Activated CD8-positive, alpha-beta T cell treated with anti-CD3 and anti-CD28 coated beads for 36 hours (primary cell): ENCODE measurements at regions of chr14 and their contacts with region 1.

Region 1: DNA sequence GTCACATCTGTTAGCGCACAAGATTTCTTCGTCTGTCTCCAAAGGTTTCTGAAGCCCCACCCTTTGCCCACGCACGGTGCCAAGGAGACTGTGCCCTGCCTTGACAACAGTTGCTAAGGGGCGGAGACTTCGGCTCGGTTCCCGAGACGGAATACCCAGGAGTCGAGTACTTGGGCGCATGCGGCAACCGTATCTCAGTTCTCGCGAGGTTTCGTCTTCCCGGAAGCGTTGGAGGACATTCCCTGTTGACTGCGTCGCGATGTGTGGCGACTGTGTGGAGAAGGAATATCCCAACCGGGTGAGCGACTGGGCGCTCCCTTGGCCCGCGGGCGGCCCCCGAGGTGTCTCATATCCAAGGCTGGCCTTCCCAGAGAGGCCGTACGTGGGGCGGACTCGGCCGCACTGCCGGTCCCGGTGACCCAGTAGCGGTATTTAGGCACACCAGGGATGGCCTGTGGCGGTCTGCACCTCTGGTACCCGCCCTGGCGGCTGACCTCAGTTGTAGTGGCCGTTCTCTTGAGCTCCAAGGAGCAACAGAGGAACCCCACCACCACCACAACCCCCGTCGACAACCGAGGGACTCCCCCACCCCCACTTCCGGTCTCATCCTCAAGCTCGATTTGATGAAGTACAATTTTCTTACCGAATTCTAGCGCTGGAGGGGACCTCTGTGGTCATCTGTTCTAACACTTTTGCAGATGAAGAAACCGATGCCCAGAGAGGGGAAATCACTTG is at the start of gene CHURC1:
- DNase-seq: peak; percentile 98
- ATAC-seq: peak; percentile 95
- H3K4me3 Mint-ChIP-seq: peak within 1 kb of the TSS; percentile 79
- H3K27ac Mint-ChIP-seq: peak within 1 kb of the TSS; percentile 95
- H3K4me1 Mint-ChIP-seq: peaks cover 55% of the 10 kb centered on the region
- H3K27me3 Mint-ChIP-seq: no peaks in the 10 kb centered on the region
- CTCF ChIP-seq: no peak
- total RNA-seq, gene CHURC1: 47.0 to 57.4 TPM

Region 2: DNA sequence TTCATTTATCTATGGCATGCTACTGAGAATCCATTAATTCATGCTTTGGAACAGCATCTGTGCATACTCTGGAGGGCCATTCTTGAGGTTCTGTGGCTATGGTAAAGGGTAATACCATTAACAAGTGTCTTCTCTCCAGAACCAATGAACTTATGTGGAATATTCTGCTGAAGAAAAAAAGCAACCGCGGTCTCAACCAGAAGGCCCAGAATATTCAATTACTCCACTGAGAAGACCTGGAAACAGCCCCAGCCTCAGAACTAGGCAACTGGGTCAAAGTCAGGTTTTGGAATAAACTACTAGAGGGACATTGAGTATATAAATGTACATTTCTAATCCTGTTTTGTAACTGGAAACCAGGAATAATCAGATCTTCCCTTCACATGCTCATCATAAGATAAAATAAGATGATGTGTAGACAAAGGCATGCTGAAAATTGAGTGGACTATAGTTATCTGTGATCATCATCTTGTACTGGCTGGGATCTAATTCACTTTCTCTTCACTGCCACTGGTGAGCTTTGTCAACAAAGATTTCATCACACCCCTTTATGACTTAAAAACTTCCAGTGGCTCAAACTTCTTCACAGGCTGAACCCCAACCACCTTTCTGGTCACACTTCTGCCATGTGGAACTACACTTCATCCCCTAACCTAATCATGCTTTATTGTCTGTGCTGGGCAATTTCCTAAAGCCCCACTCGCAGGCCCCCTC is 40.7 kb before region 1 on chr14:
- CTCF ChIA-PET with region 1: no interaction called
- POLR2A ChIA-PET with region 1: no interaction called
- intact Hi-C with region 1: no loop called
- DNase-seq: no peak
- ATAC-seq: no peak
- H3K4me3 Mint-ChIP-seq: no peak overlapping the region
- H3K27ac Mint-ChIP-seq: no peak overlapping the region
- H3K4me1 Mint-ChIP-seq: no peaks in the 10 kb centered on the region
- H3K27me3 Mint-ChIP-seq: peaks cover 27% of the 10 kb centered on the region
- CTCF ChIP-seq: no peak

Region 3: GRCh38 chr14:64928239-64929013 is 14.0 kb after region 1 on chr14:
- CTCF ChIA-PET with region 1: interaction called, 3 read pairs
- POLR2A ChIA-PET with region 1: interaction called, 11 read pairs
- intact Hi-C with region 1: no loop called
- DNase-seq: no peak
- ATAC-seq: peak; percentile 83
- H3K4me3 Mint-ChIP-seq: no peak overlapping the region
- H3K27ac Mint-ChIP-seq: no peak overlapping the region
- H3K4me1 Mint-ChIP-seq: peaks cover 32% of the 10 kb centered on the region
- H3K27me3 Mint-ChIP-seq: no peaks in the 10 kb centered on the region
- CTCF ChIP-seq: no peak

Region 4: GRCh38 chr14:65723348-65723747 is 808.9 kb after region 1 on chr14:
- CTCF ChIA-PET with region 1: no interaction called
- POLR2A ChIA-PET with region 1: no interaction called
- intact Hi-C with region 1: no loop called
- DNase-seq: no peak
- ATAC-seq: peak; percentile 51
- H3K4me3 Mint-ChIP-seq: no peak overlapping the region
- H3K27ac Mint-ChIP-seq: peak overlapping the region; percentile 75
- H3K4me1 Mint-ChIP-seq: peaks cover 25% of the 10 kb centered on the region
- H3K27me3 Mint-ChIP-seq: no peaks in the 10 kb centered on the region
- CTCF ChIP-seq: no peak